ENCODE measurements at regions of chr5 and their contacts with region 1.

Region 1: DNA sequence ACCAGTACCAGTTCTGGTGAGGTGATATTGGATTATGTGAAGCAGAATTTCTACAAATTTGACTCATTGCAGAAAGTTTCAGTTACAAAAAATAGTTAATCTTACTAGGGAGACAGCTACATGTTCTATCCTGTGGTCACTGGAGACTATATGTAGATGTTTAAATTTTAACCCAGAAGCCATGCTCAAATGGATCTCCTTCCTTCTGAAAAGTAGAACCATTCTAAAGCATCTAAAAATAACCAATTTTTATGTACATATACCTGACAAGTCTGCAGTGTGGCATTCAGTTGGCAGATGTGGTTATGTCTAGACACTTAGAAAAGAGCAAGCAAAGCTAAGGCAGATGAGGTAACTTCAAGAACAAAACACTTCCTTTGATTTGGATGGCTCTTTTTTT is 65.5 kb upstream of the POU4F3 start:
- DNase-seq: no peak
- ATAC-seq: no peak
- H3K4me3 ChIP-seq: no peak overlapping the region
- H3K27ac ChIP-seq: no peak overlapping the region
- H3K4me1 ChIP-seq: no peaks in the 10 kb centered on the region
- H3K27me3 ChIP-seq: no peaks in the 10 kb centered on the region
- CTCF ChIP-seq: no peak
- POLR2A ChIP-seq: no peak

Region 2: GRCh38 chr5:146165460-146165859 is 107.6 kb before region 1 on chr5:
- intact Hi-C with region 1: loop called (anchors 10 kb)
- DNase-seq: no peak
- ATAC-seq: no peak
- H3K4me3 ChIP-seq: no peak overlapping the region
- H3K27ac ChIP-seq: no peak overlapping the region
- H3K4me1 ChIP-seq: no peaks in the 10 kb centered on the region
- H3K27me3 ChIP-seq: no peaks in the 10 kb centered on the region
- CTCF ChIP-seq: no peak
- POLR2A ChIP-seq: no peak

Region 3: GRCh38 chr5:146340260-146341081 is 67.4 kb after region 1 on chr5:
- intact Hi-C with region 1: no loop called
- DNase-seq: peak; percentile 56 to 74 (median 62)
- ATAC-seq: peak; percentile 47
- H3K4me3 ChIP-seq: no peak overlapping the region
- H3K27ac ChIP-seq: no peak overlapping the region
- H3K4me1 ChIP-seq: peaks cover 13% of the 10 kb centered on the region
- H3K27me3 ChIP-seq: peaks cover 0 to 52% of the 10 kb centered on the region in 2 donors
- CTCF ChIP-seq: no peak
- POLR2A ChIP-seq: no peak

Region 4: DNA sequence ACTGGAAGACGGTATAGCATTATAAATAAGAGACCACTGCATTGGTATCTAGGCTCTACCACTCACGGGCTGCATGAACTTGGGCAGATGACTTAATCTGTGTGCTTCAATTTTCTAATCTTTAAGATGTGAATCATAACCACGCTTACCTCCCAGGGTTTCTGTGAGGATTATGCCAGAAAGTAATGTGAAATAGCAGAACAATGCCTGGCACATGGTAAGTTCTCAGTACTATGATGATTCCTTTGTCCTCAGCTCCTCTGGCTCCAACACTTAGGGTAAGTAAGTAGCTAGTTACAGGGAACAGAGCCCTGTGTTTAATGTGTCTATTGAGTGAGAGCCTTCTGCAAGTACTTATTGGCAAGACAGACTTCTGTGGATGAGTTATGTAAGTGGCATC is 96.6 kb after region 1 on chr5:
- intact Hi-C with region 1: no loop called
- DNase-seq: no peak
- ATAC-seq: no peak
- H3K4me3 ChIP-seq: no peak overlapping the region
- H3K27ac ChIP-seq: no peak overlapping the region
- H3K4me1 ChIP-seq: no peaks in the 10 kb centered on the region
- H3K27me3 ChIP-seq: no peaks in the 10 kb centered on the region
- CTCF ChIP-seq: no peak
- POLR2A ChIP-seq: no peak

Measured in body of pancreas (tissue), 4 donors.